Dendritic cell treated with granulocyte-macrophage colony-stimulating factor and Interleukin-4, amounts not matched to agents 40 ng/mL and 50 ng/mL, for 4 days (primary cell): ENCODE measurements at regions of chr2 and their contacts with region 1.

Region 1: DNA sequence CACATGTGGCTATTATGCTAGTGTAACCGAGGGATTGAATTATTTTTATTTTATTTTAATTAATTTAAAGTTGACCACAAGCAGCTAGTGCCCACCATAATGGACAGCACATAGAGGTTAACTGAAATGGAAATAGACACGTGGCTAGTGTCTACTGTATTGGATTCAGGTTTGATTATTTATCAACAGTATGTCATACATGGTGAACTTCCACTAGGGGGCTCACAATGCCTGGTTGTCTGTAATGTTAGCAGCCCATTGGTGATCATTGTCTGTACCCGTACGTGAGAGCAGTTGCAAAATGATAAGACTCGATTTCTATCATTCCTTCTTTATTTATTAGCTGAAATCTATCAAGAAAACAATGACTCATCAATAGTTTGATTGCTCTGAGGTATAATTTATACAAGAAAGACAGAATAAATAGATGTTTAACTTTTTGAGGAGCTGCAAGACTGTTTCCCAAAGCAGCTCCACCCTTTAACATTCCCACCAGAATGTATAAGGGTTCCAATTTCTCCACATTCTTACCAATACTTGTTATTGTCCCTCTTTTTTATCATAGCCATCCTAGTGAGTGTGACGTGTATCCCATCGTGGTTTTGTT is 76.5 kb downstream of the CYBRD1 start:
- H3K4me3 Mint-ChIP-seq: no peak overlapping the region
- H3K27ac Mint-ChIP-seq: no peak overlapping the region
- H3K4me1 Mint-ChIP-seq: peaks cover 5% of the 10 kb centered on the region
- H3K27me3 Mint-ChIP-seq: peaks cover 9% of the 10 kb centered on the region

Region 2: DNA sequence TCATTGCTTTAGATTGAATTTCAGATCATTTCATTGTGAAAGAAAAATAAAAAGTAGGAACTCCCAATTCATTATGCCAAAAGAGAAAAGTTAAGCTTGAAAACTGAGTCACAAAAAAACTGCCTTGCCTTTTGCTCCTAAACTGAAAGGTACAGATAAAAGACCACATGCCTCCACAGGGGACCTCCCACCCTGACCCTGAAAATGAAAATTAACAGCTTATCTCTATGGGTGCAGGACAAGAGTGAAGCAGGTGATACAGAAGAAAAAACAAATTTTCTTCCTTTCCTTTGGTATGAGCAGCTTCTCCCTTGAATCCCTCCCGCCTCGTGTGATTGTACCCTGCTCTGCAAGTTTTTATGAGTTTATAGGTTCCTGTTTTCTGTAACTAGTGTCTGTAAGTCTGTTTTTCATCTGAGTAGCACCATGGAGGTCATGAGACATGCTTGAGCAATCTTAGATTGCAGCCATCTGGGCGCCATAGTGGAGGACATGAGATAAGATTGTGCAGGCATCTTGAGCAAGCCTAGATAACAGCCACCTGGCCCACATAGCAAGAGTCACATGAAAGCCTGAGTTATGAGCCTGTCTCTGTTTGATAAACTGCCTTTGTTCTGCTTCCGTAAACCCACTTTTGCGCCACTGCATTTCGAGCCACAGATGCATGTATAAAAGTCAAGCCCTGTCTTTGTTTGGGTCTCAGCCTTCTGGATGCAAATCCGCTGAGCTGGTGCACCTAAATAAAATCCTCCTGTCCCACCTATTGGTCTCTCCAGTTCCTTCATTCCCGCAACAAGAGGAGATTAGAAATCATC is 32.2 kb after region 1 on chr2:
- intact Hi-C with region 1: no loop called
- H3K4me3 Mint-ChIP-seq: no peak overlapping the region
- H3K27ac Mint-ChIP-seq: no peak overlapping the region
- H3K4me1 Mint-ChIP-seq: no peaks in the 10 kb centered on the region
- H3K27me3 Mint-ChIP-seq: no peaks in the 10 kb centered on the region

Region 3: DNA sequence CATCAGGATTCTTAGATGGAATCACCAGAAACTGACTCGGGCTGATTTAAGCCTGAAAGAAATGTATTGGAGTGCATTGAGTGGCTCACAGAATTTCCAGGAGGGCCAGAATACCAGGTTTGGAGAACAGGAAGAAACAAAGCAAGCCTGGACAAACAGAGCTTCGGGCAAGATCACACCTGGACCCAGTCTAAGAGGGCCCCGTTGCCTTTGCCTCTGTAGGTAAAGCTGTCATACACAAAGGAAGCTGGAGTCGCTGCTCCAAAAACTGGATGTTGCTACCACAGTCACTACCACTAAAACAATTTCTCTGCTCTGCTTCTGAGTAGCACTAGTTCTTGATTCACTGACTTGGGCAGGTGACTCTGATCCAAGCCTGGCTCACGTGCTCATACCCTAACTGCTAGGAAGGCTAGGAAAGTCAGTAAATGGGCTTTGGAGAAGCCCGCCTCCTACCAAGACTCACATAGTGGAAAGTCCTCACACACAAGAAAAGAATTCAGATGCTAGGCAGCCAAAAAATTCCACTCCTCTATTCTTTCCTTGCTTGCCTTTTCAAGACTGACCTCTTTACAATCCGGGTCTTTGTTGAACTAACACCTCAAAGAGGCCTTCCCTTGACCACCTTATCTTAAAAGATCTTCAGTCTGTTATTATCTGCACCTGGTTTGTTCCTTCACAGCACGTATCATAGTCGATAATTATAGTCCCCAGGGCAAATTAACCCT is 77.0 kb after region 1 on chr2:
- intact Hi-C with region 1: loop called (anchors 5 kb)
- H3K4me3 Mint-ChIP-seq: no peak overlapping the region
- H3K27ac Mint-ChIP-seq: no peak overlapping the region
- H3K4me1 Mint-ChIP-seq: no peaks in the 10 kb centered on the region
- H3K27me3 Mint-ChIP-seq: no peaks in the 10 kb centered on the region

Region 4: GRCh38 chr2:172545408-172546084 is 946.7 kb after region 1 on chr2:
- intact Hi-C with region 1: no loop called
- H3K4me3 Mint-ChIP-seq: no peak overlapping the region
- H3K27ac Mint-ChIP-seq: no peak overlapping the region
- H3K4me1 Mint-ChIP-seq: peaks cover under 1% of the 10 kb centered on the region
- H3K27me3 Mint-ChIP-seq: peaks cover 3% of the 10 kb centered on the region